Caco-2 (cell line): ENCODE measurements at regions of chr13 and their contacts with region 1.

Region 1: GRCh38 chr13:95403828-95404522 is 102.7 kb upstream of the ABCC4 start:
- DNase-seq: peak; percentile 83 to 87
- H3K4me3 ChIP-seq: peak overlapping the region; percentile 32
- H3K4me3 Mint-ChIP-seq: peak overlapping the region; percentile 73
- H3K27ac Mint-ChIP-seq: peak overlapping the region; percentile 42
- H3K4me1 ChIP-seq: no peaks in the 10 kb centered on the region; the same call in 1 of the 2 replicates
- H3K4me1 Mint-ChIP-seq: peaks cover 6% of the 10 kb centered on the region
- H3K27me3 ChIP-seq: no peaks in the 10 kb centered on the region
- H3K27me3 Mint-ChIP-seq: no peaks in the 10 kb centered on the region
- CTCF ChIP-seq: peak; percentile 91

Region 2: DNA sequence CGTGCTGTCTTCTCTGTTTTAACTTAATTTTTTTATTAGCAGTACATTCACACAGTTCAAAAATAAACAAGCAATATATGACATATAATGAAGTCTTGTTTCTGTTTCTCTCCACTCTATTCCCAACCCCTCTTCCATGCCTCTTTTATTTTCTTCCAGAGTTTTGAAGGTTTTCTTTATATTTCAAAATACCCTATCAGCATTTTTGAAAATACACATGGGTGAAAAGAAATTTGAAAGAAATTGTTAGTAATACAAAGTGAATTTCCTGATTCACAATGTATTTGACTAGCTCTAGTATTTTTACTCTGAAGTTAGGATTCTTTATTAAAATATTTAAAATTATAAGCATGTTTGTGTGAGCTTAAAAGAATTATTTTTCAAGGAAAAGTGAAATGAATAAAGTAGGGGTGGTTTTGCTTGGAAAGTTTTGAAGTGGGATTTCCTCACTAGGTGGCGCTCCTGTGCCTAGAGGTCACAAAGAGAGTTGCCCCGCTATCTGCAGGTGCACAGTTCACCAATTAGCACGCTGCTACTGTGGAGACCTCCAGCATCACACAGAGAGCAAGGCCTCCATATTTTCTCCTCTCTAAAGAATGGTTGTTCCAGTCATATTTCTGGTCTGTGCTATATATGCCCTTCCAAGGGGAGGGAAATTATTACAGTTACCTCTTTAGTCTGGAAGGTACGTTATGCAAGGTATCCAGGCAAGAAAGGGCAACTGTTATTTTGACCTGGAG is 729.2 kb before region 1 on chr13:
- CTCF ChIA-PET with region 1: interaction called, 4 read pairs
- POLR2A ChIA-PET with region 1: no interaction called
- intact Hi-C with region 1: loop called (anchors 1 kb)
- DNase-seq: peak; percentile 65 to 75
- H3K4me3 ChIP-seq: no peak overlapping the region
- H3K4me3 Mint-ChIP-seq: no peak overlapping the region
- H3K27ac Mint-ChIP-seq: no peak overlapping the region
- H3K4me1 ChIP-seq: no peaks in the 10 kb centered on the region
- H3K4me1 Mint-ChIP-seq: no peaks in the 10 kb centered on the region
- H3K27me3 ChIP-seq: no peaks in the 10 kb centered on the region
- H3K27me3 Mint-ChIP-seq: peaks cover 17% of the 10 kb centered on the region
- CTCF ChIP-seq: peak; percentile 76 to 90

Region 3: GRCh38 chr13:95003019-95003813 is 400.8 kb before region 1 on chr13:
- CTCF ChIA-PET with region 1: interaction called, 3 read pairs
- POLR2A ChIA-PET with region 1: no interaction called
- intact Hi-C with region 1: loop called (anchors 5 kb)
- DNase-seq: peak; percentile 41 to 63
- H3K4me3 ChIP-seq: peak overlapping the region; percentile 29
- H3K4me3 Mint-ChIP-seq: peak overlapping the region; percentile 62
- H3K27ac Mint-ChIP-seq: peak overlapping the region; percentile 33
- H3K4me1 ChIP-seq: no peaks in the 10 kb centered on the region; the same call in 1 of the 2 replicates
- H3K4me1 Mint-ChIP-seq: peaks cover 14% of the 10 kb centered on the region
- H3K27me3 ChIP-seq: no peaks in the 10 kb centered on the region
- H3K27me3 Mint-ChIP-seq: no peaks in the 10 kb centered on the region
- CTCF ChIP-seq: no peak

Region 4: GRCh38 chr13:95301183-95301967 is 102.6 kb before region 1 on chr13 and contains the start of gene ABCC4:
- CTCF ChIA-PET with region 1: interaction called, 26 read pairs
- POLR2A ChIA-PET with region 1: no interaction called
- intact Hi-C with region 1: loop called (anchors 2 kb)
- DNase-seq: peak; percentile 84 to 91
- H3K4me3 ChIP-seq: peak within 1 kb of the TSS; percentile 91
- H3K4me3 Mint-ChIP-seq: peak within 1 kb of the TSS; percentile 99
- H3K27ac Mint-ChIP-seq: peak within 1 kb of the TSS; percentile 88
- H3K4me1 ChIP-seq: peaks cover 46% of the 10 kb centered on the region
- H3K4me1 Mint-ChIP-seq: peaks cover 32% of the 10 kb centered on the region
- H3K27me3 ChIP-seq: no peaks in the 10 kb centered on the region
- H3K27me3 Mint-ChIP-seq: no peaks in the 10 kb centered on the region
- CTCF ChIP-seq: peak in 1 of 2 experiments; percentile 24
- total RNA-seq, gene ABCC4: 51.9 and 65.7 TPM in 2 replicates

Region 5: GRCh38 chr13:95480131-95480545 is 76.2 kb after region 1 on chr13:
- CTCF ChIA-PET with region 1: no interaction called
- POLR2A ChIA-PET with region 1: no interaction called
- intact Hi-C with region 1: loop called (anchors 1 kb)
- DNase-seq: no peak
- H3K4me3 ChIP-seq: no peak overlapping the region
- H3K4me3 Mint-ChIP-seq: no peak overlapping the region
- H3K27ac Mint-ChIP-seq: no peak overlapping the region
- H3K4me1 ChIP-seq: no peaks in the 10 kb centered on the region
- H3K4me1 Mint-ChIP-seq: no peaks in the 10 kb centered on the region
- H3K27me3 ChIP-seq: no peaks in the 10 kb centered on the region; the same call in 1 of the 2 replicates
- H3K27me3 Mint-ChIP-seq: peaks cover 10% of the 10 kb centered on the region
- CTCF ChIP-seq: no peak